PC-9 (cell line): ENCODE measurements at regions of chr10 and their contacts with region 1.

Region 1: GRCh38 chr10:119542988-119543813 is 682 bp upstream of the RGS10 start:
- DNase-seq: peak; percentile 35 to 44
- H3K4me3 ChIP-seq: peak overlapping the region; percentile 77
- H3K27ac ChIP-seq: peak overlapping the region; percentile 32
- H3K4me1 ChIP-seq: peaks cover 31% of the 10 kb centered on the region
- H3K27me3 ChIP-seq: no peaks in the 10 kb centered on the region
- CTCF ChIP-seq: peak; percentile 62

Region 2: GRCh38 chr10:119199231-119199992 is 343.8 kb before region 1 on chr10:
- CTCF ChIA-PET with region 1: interaction called, 3 read pairs
- POLR2A ChIA-PET with region 1: interaction called, 4 read pairs
- intact Hi-C with region 1: loop called (anchors 5 kb)
- DNase-seq: peak; percentile 27 to 44
- H3K4me3 ChIP-seq: no peak overlapping the region
- H3K27ac ChIP-seq: no peak overlapping the region
- H3K4me1 ChIP-seq: peaks cover 22% of the 10 kb centered on the region
- H3K27me3 ChIP-seq: no peaks in the 10 kb centered on the region
- CTCF ChIP-seq: peak; percentile 63

Region 3: GRCh38 chr10:119416855-119417254 is 126.3 kb before region 1 on chr10:
- CTCF ChIA-PET with region 1: no interaction called
- POLR2A ChIA-PET with region 1: no interaction called
- intact Hi-C with region 1: loop called (anchors 2 kb)
- DNase-seq: peak in 1 of 2 experiments; percentile 55
- H3K4me3 ChIP-seq: no peak overlapping the region
- H3K27ac ChIP-seq: no peak overlapping the region
- H3K4me1 ChIP-seq: no peaks in the 10 kb centered on the region
- H3K27me3 ChIP-seq: no peaks in the 10 kb centered on the region
- CTCF ChIP-seq: peak; percentile 78

Region 4: GRCh38 chr10:119522747-119523431 is 20.3 kb before region 1 on chr10:
- CTCF ChIA-PET with region 1: interaction called, 4 read pairs
- POLR2A ChIA-PET with region 1: interaction called, 5 read pairs
- intact Hi-C with region 1: loop called (anchors 1 kb)
- DNase-seq: peak; percentile 85 to 96
- H3K4me3 ChIP-seq: no peak overlapping the region
- H3K27ac ChIP-seq: peak overlapping the region; percentile 77
- H3K4me1 ChIP-seq: peaks cover 28% of the 10 kb centered on the region
- H3K27me3 ChIP-seq: no peaks in the 10 kb centered on the region
- CTCF ChIP-seq: no peak